ENCODE measurements at regions of chr7 and their contacts with region 1.

Region 1: GRCh38 chr7:50206453-50207250 is 97.9 kb upstream of the IKZF1 start:
- DNase-seq: no peak
- CTCF ChIP-seq: no peak

Region 2: DNA sequence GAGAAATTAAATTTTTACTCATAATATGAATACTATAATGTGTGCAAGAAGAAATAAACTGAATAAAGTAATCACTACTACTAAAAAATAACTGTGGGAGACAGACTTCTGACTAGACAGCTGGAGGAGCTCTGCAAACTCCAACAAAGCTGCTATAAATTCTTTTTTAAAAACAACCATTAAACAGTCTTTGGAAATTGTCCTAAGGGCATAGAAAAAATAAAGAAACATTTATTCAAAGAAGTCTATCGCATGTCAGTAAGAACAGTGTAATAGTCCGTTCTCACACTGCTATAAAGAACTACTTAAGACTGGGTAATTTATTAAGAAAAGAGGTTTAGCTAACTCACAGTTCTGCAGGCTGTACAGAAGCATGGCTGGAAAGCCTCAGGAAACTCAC is 169.6 kb before region 1 on chr7:
- CTCF ChIA-PET with region 1: no interaction called
- POLR2A ChIA-PET with region 1: no interaction called
- DNase-seq: no peak
- CTCF ChIP-seq: no peak

Region 3: GRCh38 chr7:50092579-50093491 is 113.8 kb before region 1 on chr7 and contains the start of gene ZPBP:
- CTCF ChIA-PET with region 1: interaction called, 17 read pairs
- POLR2A ChIA-PET with region 1: no interaction called
- DNase-seq: peak; percentile 54
- CTCF ChIP-seq: peak; percentile 74

Region 4: GRCh38 chr7:50221028-50221427 is 14.4 kb after region 1 on chr7:
- CTCF ChIA-PET with region 1: interaction called, 16 read pairs
- POLR2A ChIA-PET with region 1: no interaction called
- DNase-seq: no peak
- CTCF ChIP-seq: no peak

Region 5: GRCh38 chr7:50307368-50308032 is 100.8 kb after region 1 on chr7:
- CTCF ChIA-PET with region 1: interaction called, 13 read pairs
- POLR2A ChIA-PET with region 1: no interaction called
- DNase-seq: no peak
- CTCF ChIP-seq: no peak

Region 6: GRCh38 chr7:50359995-50360925 is 153.6 kb after region 1 on chr7:
- CTCF ChIA-PET with region 1: interaction called, 136 read pairs
- POLR2A ChIA-PET with region 1: no interaction called
- DNase-seq: no peak
- CTCF ChIP-seq: no peak

Region 7: DNA sequence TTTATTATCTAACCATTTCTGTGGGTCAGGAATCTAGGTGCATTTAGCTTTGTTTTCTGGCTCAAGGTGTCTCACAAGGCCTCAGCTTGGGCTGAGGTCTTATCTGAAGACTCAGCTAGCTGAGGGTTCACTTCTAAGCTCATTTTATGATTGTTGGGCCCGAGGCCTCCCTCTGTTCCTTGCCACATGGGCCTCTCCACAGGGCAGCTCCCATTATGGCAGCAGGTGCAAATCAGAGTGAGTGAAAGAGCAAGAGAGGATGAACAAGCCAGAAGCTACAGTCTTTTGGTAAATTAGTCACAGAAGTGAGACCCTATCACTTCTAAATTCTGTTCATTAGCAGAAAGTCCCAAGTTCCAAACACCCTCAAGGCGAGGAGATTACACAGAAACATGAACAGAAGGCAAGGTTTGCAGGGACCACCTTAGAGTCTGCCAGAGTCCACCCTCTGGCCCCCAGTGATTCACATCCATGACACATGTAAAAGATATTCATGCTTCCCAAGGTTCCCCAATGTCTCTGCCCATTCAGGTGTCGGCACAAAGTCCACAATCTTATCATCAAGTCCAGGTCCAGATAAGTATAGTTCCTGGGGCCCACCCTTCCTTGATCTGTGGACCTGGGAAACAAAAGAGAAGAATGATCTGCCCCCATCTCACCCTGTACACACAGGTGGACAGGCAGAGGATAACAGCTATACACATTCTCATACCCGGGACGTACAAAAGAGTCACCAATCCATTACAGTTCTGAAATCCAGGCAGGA is 219.8 kb after region 1 on chr7:
- CTCF ChIA-PET with region 1: interaction called, 99 read pairs
- POLR2A ChIA-PET with region 1: no interaction called
- DNase-seq: no peak
- CTCF ChIP-seq: no peak